Dendritic cell treated with granulocyte-macrophage colony-stimulating factor and Interleukin-4, amounts not matched to agents 40 ng/mL and 50 ng/mL, for 4 days (primary cell): ENCODE measurements at regions of chr15 and their contacts with region 1.

Region 1: GRCh38 chr15:65638681-65639089 is 16.9 kb downstream of the SLC24A1 start:
- H3K4me3 Mint-ChIP-seq: no peak overlapping the region
- H3K27ac Mint-ChIP-seq: no peak overlapping the region
- H3K4me1 Mint-ChIP-seq: peaks cover 20% of the 10 kb centered on the region
- H3K27me3 Mint-ChIP-seq: no peaks in the 10 kb centered on the region

Region 2: GRCh38 chr15:65856821-65857455 is 218.3 kb after region 1 on chr15:
- intact Hi-C with region 1: loop called (anchors 5 kb)
- H3K4me3 Mint-ChIP-seq: no peak overlapping the region
- H3K27ac Mint-ChIP-seq: no peak overlapping the region
- H3K4me1 Mint-ChIP-seq: peaks cover 6% of the 10 kb centered on the region
- H3K27me3 Mint-ChIP-seq: no peaks in the 10 kb centered on the region